Activated T-helper 1 cell treated with anti-CD3 and anti-CD28 coated beads, Interleukin-12 subunit alpha, Interleukin-12 subunit beta, Interleukin-2, Interleukin-4 antibody, amounts not matched to agents 30 ng/mL and 10 ng/mL and 1 ng/mL, durations not matched to agents 14 hours and 24 hours and 36 hours (primary cell): ENCODE measurements at regions of chr3 and their contacts with region 1.

Region 1: GRCh38 chr3:16378920-16379319 is 113.9 kb downstream of the OXNAD1 start:
- DNase-seq: peak; percentile 28
- H3K4me3 Mint-ChIP-seq: peak overlapping the region; percentile 31
- H3K27ac Mint-ChIP-seq: peak overlapping the region; percentile 94
- H3K4me1 Mint-ChIP-seq: peaks cover 95% of the 10 kb centered on the region
- H3K27me3 Mint-ChIP-seq: no peaks in the 10 kb centered on the region

Region 2: DNA sequence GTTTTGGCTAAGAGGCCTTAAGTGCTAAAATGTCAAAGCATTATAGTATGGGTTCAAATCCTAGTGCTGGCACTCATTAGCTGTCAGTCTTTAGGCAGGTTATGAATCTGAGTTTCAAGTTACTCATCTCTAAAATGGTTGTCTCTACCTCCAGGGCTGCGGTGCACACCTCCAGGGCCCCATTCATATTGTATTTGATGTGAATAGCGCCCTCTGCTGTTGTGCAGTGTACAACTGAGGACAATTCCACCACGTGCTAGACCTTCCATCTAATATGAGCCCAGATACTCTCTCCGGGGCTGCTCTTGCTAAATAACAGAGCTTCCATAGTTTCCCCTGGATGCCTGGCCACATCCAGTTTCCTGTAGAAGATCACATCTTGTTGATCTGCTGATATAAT is 59.6 kb before region 1 on chr3:
- intact Hi-C with region 1: loop called (anchors 2 kb)
- DNase-seq: peak; percentile 74
- H3K4me3 Mint-ChIP-seq: peak overlapping the region; percentile 6
- H3K27ac Mint-ChIP-seq: peak overlapping the region; percentile 89
- H3K4me1 Mint-ChIP-seq: peaks cover 71% of the 10 kb centered on the region
- H3K27me3 Mint-ChIP-seq: no peaks in the 10 kb centered on the region

Region 3: GRCh38 chr3:16338999-16339398 is 39.9 kb before region 1 on chr3:
- intact Hi-C with region 1: loop called (anchors 2 kb)
- DNase-seq: peak; percentile 12
- H3K4me3 Mint-ChIP-seq: peak overlapping the region; percentile 5
- H3K27ac Mint-ChIP-seq: peak overlapping the region; percentile 81
- H3K4me1 Mint-ChIP-seq: peaks cover 54% of the 10 kb centered on the region
- H3K27me3 Mint-ChIP-seq: no peaks in the 10 kb centered on the region

Region 4: DNA sequence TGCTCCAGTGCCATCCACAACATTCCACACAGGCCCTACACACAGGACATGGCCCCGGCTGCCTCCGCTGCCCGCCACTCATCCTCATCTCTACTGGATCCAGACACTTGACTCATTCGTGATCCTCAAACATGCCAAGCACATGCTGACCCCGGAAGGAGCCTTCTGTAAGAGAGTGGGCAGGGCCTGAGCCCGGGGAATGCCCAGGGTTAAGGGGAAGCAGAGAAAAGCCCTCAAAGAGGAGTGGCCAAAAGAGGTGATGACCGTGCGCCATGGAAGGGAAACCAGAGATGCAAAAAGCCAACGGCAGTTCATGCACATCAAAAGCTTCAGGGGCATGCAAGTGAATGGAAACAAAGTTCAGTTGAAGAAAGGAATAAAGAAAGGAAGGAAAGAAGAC is 88.5 kb after region 1 on chr3:
- intact Hi-C with region 1: loop called (anchors 2 kb)
- DNase-seq: peak; percentile 58
- H3K4me3 Mint-ChIP-seq: peak overlapping the region; percentile 76
- H3K27ac Mint-ChIP-seq: peak overlapping the region; percentile 92
- H3K4me1 Mint-ChIP-seq: peaks cover 80% of the 10 kb centered on the region
- H3K27me3 Mint-ChIP-seq: no peaks in the 10 kb centered on the region

Region 5: DNA sequence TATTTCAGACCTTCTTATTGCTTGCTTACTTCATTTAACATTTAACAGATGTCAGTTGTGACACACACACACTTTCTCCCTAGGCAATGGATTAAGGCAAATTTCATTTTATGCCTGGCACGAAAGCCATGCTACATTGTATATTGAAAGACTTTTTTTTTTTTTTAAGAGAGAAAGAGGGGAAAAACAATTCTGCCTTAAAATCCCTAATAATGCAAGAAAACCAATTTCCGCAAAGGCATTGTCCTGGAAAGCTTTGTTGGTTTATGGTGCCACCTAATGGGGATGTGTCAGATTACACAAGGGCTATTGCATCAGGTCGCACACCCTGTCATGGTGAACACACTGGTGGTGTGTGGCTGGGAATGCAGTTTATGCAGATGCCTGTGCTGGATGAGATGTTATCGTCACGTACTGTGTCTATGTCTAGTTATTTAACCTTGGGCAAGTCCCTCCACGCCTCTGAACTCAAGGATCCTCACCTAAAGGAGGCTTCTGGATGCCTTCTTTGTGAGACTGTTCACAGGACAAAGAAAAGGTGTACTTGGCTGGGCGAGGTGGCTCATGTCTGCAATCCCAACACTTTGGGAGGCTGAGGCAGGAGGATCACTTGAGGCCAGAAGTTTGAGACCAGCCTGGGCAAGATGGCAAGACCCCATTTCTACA is 171.9 kb after region 1 on chr3:
- intact Hi-C with region 1: loop called (anchors 5 kb)
- DNase-seq: peak; percentile 67
- H3K4me3 Mint-ChIP-seq: no peak overlapping the region
- H3K27ac Mint-ChIP-seq: peak overlapping the region; percentile 71
- H3K4me1 Mint-ChIP-seq: peaks cover 27% of the 10 kb centered on the region
- H3K27me3 Mint-ChIP-seq: peaks cover 6% of the 10 kb centered on the region

Region 6: DNA sequence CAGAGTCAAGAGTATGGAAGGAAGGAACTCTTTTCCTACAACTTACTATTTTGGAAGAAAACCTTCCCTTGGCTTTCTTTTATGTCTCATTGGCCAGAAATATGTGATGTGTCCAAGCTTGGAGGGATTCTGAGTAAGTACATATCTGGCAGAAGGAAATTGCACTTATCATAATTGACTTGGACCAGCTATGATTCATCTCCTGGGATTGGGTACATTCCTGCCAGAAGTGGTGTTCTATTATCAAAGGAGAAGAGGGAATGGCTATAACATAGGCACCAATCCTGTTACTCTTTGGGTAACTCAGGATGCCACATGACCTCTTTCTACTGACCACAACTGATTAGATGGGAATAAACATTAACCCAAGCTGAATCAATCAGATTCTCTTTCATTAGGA is 239.8 kb after region 1 on chr3:
- intact Hi-C with region 1: no loop called
- DNase-seq: no peak
- H3K4me3 Mint-ChIP-seq: no peak overlapping the region
- H3K27ac Mint-ChIP-seq: no peak overlapping the region
- H3K4me1 Mint-ChIP-seq: no peaks in the 10 kb centered on the region
- H3K27me3 Mint-ChIP-seq: peaks cover 5% of the 10 kb centered on the region

Region 7: GRCh38 chr3:16686679-16687078 is 307.8 kb after region 1 on chr3:
- intact Hi-C with region 1: no loop called
- DNase-seq: no peak
- H3K4me3 Mint-ChIP-seq: no peak overlapping the region
- H3K27ac Mint-ChIP-seq: no peak overlapping the region
- H3K4me1 Mint-ChIP-seq: no peaks in the 10 kb centered on the region
- H3K27me3 Mint-ChIP-seq: peaks cover 10% of the 10 kb centered on the region

Region 8: DNA sequence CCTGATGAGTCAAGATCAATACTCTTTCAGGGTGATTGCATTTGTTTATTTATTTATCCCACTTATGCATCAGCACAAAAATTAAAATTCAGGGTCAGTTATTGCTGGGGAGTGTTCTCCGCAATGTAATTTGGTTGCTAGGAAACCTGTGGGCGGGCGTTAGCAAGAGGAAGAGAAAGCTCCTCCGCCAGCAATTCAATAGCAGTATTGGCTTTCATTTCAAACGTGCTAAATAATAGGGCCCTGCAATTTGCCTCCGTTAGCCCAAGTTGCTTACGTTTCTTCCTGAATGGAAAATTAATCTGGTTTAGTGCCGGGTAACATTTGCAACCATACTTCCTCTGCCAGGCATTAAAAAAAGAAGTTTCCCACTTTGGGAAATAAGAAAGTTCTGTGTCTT is 470.3 kb after region 1 on chr3:
- intact Hi-C with region 1: loop called (anchors 10 kb)
- DNase-seq: peak; percentile 57
- H3K4me3 Mint-ChIP-seq: peak overlapping the region; percentile 48
- H3K27ac Mint-ChIP-seq: peak overlapping the region; percentile 56
- H3K4me1 Mint-ChIP-seq: peaks cover 32% of the 10 kb centered on the region
- H3K27me3 Mint-ChIP-seq: peaks cover 5% of the 10 kb centered on the region